Posterior cingulate gyrus (tissue), 11 donors: ENCODE measurements at regions of chr3 and their contacts with region 1.

Region 1: DNA sequence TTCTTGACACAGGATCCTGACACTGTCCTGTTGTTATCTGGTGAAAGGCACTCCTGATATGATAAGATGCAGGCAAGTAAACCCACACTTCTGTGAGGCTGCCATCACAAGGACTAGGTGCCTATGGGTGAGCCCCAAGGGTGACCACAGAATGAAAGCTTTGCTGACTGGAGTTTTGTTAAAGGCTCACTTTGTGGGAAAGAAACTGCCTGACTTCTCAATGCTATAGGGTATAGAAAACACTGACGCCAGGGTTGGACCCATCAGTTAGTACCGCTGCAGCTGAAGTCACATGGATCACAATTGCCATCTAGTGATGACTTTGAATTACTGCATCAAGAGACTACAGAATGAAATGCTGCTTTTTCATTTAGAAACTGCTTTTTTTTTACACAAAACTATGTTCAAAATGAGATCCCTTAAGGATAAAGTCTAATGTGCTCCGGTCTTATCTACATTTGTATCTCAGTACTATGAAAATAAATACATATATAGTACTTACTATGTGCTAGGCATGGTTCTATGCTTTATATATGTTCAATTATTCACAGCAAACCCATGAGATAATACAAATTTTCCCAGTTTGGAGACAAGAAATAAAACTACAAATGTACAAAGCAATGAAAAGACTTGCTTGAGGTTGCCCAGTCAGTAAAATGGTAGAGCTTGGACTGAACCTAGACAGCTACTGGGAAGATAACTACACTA is 64.2 kb upstream of the CMSS1 start:
- DNase-seq: peak in 6 of 10 donors; percentile 13 to 75 (median 20)

Region 2: DNA sequence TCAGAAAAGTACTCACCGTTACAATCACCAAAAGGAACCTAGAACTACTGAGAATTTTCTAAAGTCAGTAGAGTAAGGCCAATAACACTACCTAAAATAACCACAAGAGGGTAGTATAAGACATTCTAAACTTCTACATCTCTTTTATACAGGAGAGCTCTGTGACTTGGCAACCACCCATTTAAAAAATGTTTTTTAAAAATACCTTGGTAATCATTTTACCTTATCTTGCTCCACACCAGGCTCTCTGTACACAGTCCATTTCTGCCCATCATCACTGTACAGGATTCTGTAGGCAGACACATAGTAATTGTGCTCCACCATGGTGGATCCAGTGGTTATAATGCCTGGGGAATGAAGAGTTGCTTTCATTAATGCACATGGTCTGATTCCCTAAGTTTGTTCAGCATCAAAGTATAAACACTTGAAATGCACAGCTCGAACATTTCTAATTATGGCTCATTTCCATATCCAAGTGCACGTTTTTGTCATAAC is 935.8 kb before region 1 on chr3:
- intact Hi-C with region 1: loop called (anchors 10 kb)
- DNase-seq: no peak

Region 3: GRCh38 chr3:99499235-99500158 is 253.9 kb before region 1 on chr3:
- intact Hi-C with region 1: loop called (anchors 5 kb)
- DNase-seq: peak in 6 of 10 donors; percentile 11 to 69 (median 23)

Region 4: DNA sequence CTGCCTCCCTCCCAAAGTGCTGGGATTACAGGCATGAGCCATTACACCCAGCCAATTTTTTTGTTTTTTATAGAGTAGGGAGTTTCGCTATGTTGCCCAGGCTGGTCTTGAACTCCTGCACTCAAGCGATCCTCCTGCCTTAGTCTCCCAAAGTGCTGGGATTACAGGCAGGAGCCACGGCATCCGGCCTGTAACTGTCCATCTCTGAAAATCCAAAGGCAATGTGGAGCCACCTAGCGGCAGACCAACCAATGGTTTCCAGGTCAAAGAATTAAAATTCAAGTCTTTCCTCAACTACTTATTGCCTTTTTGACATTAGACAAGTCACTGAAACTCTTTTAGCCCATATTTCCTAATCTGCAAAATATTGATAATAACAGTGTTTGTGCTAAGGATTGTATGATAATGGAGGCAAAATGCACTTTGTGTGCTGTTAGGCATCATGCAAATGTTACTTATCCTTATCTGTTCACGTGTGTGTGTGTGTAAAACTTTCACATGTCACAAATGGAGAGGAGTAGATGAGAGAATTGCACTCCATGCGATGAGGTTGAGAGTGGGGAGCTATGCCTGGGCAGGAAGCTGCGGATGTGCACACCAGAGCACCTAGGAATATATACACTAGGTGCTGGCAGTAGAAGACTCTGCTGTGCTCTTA is 66.3 kb before region 1 on chr3:
- intact Hi-C with region 1: no loop called
- DNase-seq: peak in 7 of 10 donors; percentile 26 to 82 (median 56)